GM12878 (cell line): ENCODE measurements at regions of chr6 and their contacts with region 1.

Region 1: DNA sequence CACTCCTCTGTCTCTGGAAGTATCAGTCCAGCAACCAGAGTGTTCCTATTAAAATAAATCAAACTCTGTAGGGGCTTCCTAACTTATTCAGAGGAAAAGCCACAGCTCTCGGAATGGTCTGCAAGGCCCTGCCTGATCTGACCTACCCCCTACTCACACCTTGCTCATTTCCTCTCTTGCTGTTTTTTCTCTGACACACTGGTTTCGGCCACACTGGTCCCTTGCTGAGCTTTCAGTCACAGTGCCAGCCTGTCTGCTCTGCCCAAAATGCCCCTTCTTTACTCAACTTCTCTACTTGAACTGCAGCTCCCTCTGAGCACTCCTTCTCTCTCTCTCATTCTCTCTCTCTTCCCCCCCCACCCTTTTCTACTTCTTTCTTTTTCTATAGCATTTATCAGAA is 430.2 kb downstream of the UTRN start:
- DNase-seq: no peak
- ATAC-seq: peak; percentile 97
- H3K4me3 ChIP-seq: no peak overlapping the region
- H3K27ac ChIP-seq: no peak overlapping the region
- H3K4me1 ChIP-seq: 0 out of 2 replicates have a peak, but pooled peaks cover 4% of the 10 kb centered on the region
- H3K27me3 ChIP-seq: no peaks in the 10 kb centered on the region
- CTCF ChIP-seq: no peak
- EP300 ChIP-seq: no peak
- POLR2A ChIP-seq: no peak
- RAD21 ChIP-seq: no peak

Region 2: GRCh38 chr6:144726129-144726522 is 10.8 kb after region 1 on chr6:
- CTCF ChIA-PET with region 1: interaction called, 5 read pairs
- POLR2A ChIA-PET with region 1: no interaction called
- RAD21 ChIA-PET with region 1: interaction called, 7 read pairs
- SMC1A ChIA-PET with region 1: interaction called, 12 read pairs
- in situ Hi-C with region 1: no loop called
- intact Hi-C with region 1: no loop called
- DNase-seq: no peak
- ATAC-seq: peak; percentile 77
- H3K4me3 ChIP-seq: no peak overlapping the region
- H3K27ac ChIP-seq: no peak overlapping the region
- H3K4me1 ChIP-seq: peaks cover 20% of the 10 kb centered on the region; the same call in 1 of the 2 replicates
- H3K27me3 ChIP-seq: no peaks in the 10 kb centered on the region
- CTCF ChIP-seq: no peak
- EP300 ChIP-seq: peak in 1 of 2 experiments; percentile 19; a peak in 1 of 4 replicates
- POLR2A ChIP-seq: no peak
- RAD21 ChIP-seq: no peak